ENCODE measurements at regions of chr4 and their contacts with region 1.

Region 1: DNA sequence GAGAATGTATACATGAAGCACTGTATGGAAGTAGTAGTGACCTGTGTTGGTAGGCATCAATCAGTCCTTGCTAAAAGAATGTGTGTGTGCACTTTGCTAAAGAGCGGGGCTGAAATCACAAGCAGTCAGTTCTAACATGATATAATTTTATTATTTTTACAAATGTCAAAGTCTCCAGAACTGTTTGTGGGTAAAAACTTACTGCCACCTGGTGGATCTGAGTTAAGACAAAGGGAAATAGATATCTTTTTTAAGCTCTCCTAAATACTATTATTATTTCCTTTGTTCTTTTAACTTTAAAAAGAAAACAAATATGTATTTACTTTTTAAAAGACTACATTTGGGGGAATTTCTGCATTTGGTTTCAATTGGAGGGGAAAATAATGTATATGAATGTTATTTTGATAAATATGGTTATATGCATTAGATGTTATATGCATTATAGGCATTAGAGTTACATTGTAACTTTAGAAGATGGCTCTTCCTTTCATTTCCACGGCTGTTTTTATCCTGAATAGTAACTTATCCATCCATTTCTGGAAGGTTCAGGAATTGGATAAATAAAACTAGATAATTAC is 7.8 kb upstream of the CLOCK start:
- DNase-seq: peak; percentile 19
- ATAC-seq: no peak
- H3K4me3 ChIP-seq: no peak overlapping the region
- H3K27ac ChIP-seq: no peak overlapping the region
- H3K4me1 ChIP-seq: peaks cover 19% of the 10 kb centered on the region
- H3K27me3 ChIP-seq: no peaks in the 10 kb centered on the region; a peak in 1 of 5 replicates
- CTCF ChIP-seq: peak; percentile 42
- EP300 ChIP-seq: no peak
- POLR2A ChIP-seq: no peak
- RAD21 ChIP-seq: no peak

Region 2: GRCh38 chr4:55184600-55185523 is 369.7 kb before region 1 on chr4:
- CTCF ChIA-PET with region 1: no interaction called
- POLR2A ChIA-PET with region 1: no interaction called
- in situ Hi-C with region 1: no loop called
- intact Hi-C with region 1: loop called (anchors 10 kb)
- DNase-seq: peak; percentile 35
- ATAC-seq: peak; percentile 84
- H3K4me3 ChIP-seq: no peak overlapping the region; a peak in 1 of 6 replicates
- H3K27ac ChIP-seq: no peak overlapping the region
- H3K4me1 ChIP-seq: no peaks in the 10 kb centered on the region
- H3K27me3 ChIP-seq: no peaks in the 10 kb centered on the region
- CTCF ChIP-seq: peak; percentile 59
- EP300 ChIP-seq: no peak
- POLR2A ChIP-seq: no peak
- RAD21 ChIP-seq: no peak

Region 3: DNA sequence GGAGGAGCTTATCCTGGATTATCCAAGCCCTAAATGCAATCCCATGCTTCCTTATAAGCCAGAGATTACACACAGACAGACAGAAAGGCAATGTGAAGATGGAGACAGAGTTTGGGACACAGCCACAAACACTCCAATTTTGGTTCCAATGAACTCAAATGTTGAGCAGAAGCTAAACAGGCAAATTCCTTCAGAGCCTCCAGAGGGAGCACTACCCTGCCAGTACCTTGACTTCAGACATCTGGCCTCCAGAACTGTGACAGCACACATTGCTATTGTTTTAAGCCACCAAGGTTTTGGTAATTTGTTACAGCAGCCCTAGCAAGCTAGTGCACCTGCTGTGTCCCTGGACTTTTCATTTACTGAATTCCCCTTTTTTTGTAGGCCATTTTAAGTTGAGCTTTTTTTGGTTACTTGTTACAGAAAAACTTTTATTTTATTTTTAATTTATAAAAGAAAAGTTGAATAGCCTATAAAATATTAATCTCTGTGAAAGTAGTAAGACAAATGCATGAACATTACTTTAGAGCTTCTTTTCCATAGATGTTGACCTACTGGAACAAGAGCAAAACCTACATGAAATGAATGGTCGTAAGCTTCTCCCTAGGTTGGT is 241.9 kb before region 1 on chr4:
- CTCF ChIA-PET with region 1: interaction called, 3 read pairs
- POLR2A ChIA-PET with region 1: no interaction called
- in situ Hi-C with region 1: no loop called
- intact Hi-C with region 1: loop called (anchors 1 kb)
- DNase-seq: peak; percentile 33
- ATAC-seq: peak; percentile 91
- H3K4me3 ChIP-seq: no peak overlapping the region
- H3K27ac ChIP-seq: no peak overlapping the region
- H3K4me1 ChIP-seq: no peaks in the 10 kb centered on the region
- H3K27me3 ChIP-seq: peaks cover 0 to 3% of the 10 kb centered on the region in 2 experiments; a peak in 1 of 5 replicates
- CTCF ChIP-seq: peak; percentile 70
- EP300 ChIP-seq: no peak
- POLR2A ChIP-seq: no peak
- RAD21 ChIP-seq: peak; percentile 19; the same call in 1 of the 2 replicates

Region 4: DNA sequence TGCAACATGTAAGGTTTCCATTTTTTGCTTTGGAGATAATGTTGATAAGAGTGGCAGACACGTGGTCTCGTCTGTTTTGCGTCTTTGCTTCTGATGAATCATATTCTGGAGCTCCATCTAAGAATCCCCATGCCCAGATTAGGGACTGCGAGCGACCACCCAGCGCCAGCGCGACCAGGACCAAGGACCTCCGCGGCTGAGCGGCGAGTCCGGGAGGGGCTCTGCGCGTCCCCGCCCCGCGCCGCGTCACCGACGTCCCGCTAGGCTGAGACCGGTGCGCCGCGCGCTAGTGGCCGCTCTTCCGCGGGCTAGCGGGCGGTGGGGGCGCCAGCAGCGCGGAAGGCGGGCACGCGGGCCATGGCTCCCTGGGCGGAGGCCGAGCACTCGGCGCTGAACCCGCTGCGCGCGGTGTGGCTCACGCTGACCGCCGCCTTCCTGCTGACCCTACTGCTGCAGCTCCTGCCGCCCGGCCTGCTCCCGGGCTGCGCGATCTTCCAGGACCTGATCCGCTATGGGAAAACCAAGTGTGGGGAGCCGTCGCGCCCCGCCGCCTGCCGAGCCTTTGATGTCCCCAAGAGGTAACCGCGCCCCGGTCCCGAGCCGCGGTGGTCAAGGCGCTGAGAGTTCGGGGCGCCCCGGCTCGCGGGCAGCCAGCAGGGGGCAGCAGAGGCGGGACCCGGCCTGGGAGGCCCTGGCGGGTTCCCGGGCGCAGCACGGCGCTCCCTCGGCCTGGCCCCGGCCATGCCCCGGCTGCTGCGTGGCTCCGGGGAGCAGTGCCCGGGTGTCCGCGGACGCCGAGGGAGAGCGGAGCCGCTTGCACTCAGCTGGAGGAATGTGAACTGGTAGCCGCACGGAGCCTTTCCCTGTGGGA is 208.3 kb before region 1 on chr4 and contains the start of gene SRD5A3:
- CTCF ChIA-PET with region 1: interaction called, 8 read pairs
- POLR2A ChIA-PET with region 1: no interaction called
- in situ Hi-C with region 1: no loop called
- intact Hi-C with region 1: loop called (anchors 2 kb)
- DNase-seq: peak; percentile 66
- ATAC-seq: peak; percentile 96
- H3K4me3 ChIP-seq: peak within 1 kb of the TSS; percentile 57 to 70 (median 66)
- H3K27ac ChIP-seq: peak within 1 kb of the TSS; percentile 86
- H3K4me1 ChIP-seq: peaks cover 34% of the 10 kb centered on the region
- H3K27me3 ChIP-seq: no peaks in the 10 kb centered on the region
- CTCF ChIP-seq: peak; percentile 84
- EP300 ChIP-seq: 0 out of 4 replicates have a peak, but pooled peaks of 1 of the 2 experiments have one; percentile 44
- POLR2A ChIP-seq: peak; percentile 79 to 90
- RAD21 ChIP-seq: peak; percentile 93
- total RNA-seq, gene SRD5A3: 12.8 and 18.4 TPM in 2 replicates

Region 5: GRCh38 chr4:55444827-55445226 is 109.7 kb before region 1 on chr4:
- CTCF ChIA-PET with region 1: no interaction called
- POLR2A ChIA-PET with region 1: no interaction called
- in situ Hi-C with region 1: no loop called
- intact Hi-C with region 1: loop called (anchors 2 kb)
- DNase-seq: peak; percentile 7
- ATAC-seq: no peak
- H3K4me3 ChIP-seq: no peak overlapping the region
- H3K27ac ChIP-seq: no peak overlapping the region
- H3K4me1 ChIP-seq: no peaks in the 10 kb centered on the region
- H3K27me3 ChIP-seq: no peaks in the 10 kb centered on the region
- CTCF ChIP-seq: peak; percentile 37
- EP300 ChIP-seq: no peak
- POLR2A ChIP-seq: no peak
- RAD21 ChIP-seq: no peak

Region 6: DNA sequence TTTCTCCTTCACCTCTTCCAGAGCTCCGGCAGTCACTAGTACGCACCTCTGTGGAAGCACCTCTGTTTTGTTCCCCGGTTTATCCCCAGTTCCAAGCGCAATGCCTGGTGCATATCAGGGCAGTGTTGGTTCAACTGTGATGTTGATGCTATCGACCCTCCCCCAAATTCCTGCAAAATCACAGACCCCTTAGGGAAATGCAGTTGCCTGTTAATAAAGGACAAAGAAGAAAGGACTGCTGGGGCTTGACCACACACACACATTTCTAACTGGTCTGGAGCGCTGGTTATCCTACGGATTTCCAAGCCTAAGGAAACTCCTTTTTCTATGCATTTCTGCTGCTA is 82.1 kb after region 1 on chr4:
- CTCF ChIA-PET with region 1: no interaction called
- POLR2A ChIA-PET with region 1: no interaction called
- in situ Hi-C with region 1: no loop called
- intact Hi-C with region 1: no loop called
- DNase-seq: no peak
- ATAC-seq: no peak; the same call in 2 of the 3 replicates
- H3K4me3 ChIP-seq: peak overlapping the region in 2 of 3 experiments; percentile 41 to 57; a peak in 2 of 6 replicates
- H3K27ac ChIP-seq: no peak overlapping the region
- H3K4me1 ChIP-seq: peaks cover 14% of the 10 kb centered on the region
- H3K27me3 ChIP-seq: peaks cover 7 to 43% of the 10 kb centered on the region in 2 experiments
- CTCF ChIP-seq: no peak
- EP300 ChIP-seq: no peak
- POLR2A ChIP-seq: no peak
- RAD21 ChIP-seq: no peak

Region 7: GRCh38 chr4:55682295-55682694 is 127.8 kb after region 1 on chr4:
- CTCF ChIA-PET with region 1: no interaction called
- POLR2A ChIA-PET with region 1: no interaction called
- in situ Hi-C with region 1: no loop called
- intact Hi-C with region 1: no loop called
- DNase-seq: no peak
- ATAC-seq: no peak
- H3K4me3 ChIP-seq: no peak overlapping the region
- H3K27ac ChIP-seq: no peak overlapping the region
- H3K4me1 ChIP-seq: no peaks in the 10 kb centered on the region
- H3K27me3 ChIP-seq: no peaks in the 10 kb centered on the region; a peak in 1 of 5 replicates
- CTCF ChIP-seq: no peak
- EP300 ChIP-seq: no peak
- POLR2A ChIP-seq: no peak
- RAD21 ChIP-seq: no peak

Region 8: GRCh38 chr4:55830716-55831115 is 276.2 kb after region 1 on chr4:
- CTCF ChIA-PET with region 1: no interaction called
- POLR2A ChIA-PET with region 1: no interaction called
- in situ Hi-C with region 1: no loop called
- intact Hi-C with region 1: no loop called
- DNase-seq: no peak
- ATAC-seq: no peak
- H3K4me3 ChIP-seq: no peak overlapping the region
- H3K27ac ChIP-seq: no peak overlapping the region
- H3K4me1 ChIP-seq: no peaks in the 10 kb centered on the region
- H3K27me3 ChIP-seq: peaks cover 0 to 3% of the 10 kb centered on the region in 2 experiments; a peak in 1 of 5 replicates
- CTCF ChIP-seq: no peak
- EP300 ChIP-seq: no peak
- POLR2A ChIP-seq: no peak
- RAD21 ChIP-seq: no peak

Measured in HepG2 (cell line).